ENCODE measurements at regions of chr16 and their contacts with region 1.

Region 1: DNA sequence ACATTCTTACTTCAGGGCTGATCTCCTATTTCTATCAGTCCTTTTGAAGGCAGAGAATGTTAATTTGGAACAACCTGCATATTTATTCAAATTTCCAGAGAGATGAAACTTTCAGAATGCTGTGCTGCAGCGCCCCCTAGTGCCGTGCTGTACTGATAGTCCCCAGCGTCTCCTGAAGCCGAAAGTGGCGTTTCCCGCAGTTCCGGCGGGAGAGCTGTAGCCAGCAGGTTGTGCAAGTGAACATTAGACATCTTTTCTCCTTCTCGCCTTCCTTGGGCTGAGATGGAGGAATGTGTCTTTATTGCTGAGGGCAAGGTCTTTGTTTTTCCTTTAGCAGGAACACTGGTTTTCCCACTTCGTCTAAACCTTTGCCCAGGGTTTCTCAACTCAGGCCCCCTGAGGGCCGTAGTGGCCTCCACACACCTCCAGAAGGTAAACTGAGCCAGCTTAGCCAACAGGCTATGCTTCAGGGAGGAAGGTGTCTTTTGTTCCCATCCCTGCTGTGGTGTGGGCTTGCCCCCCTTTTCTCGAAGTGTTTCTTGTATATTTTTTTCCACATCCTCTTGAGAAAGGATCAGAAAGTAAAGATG is 26.4 kb downstream of the USP10 start:
- DNase-seq: peak; percentile 86
- H3K4me3 Mint-ChIP-seq: no peak overlapping the region
- H3K27ac Mint-ChIP-seq: no peak overlapping the region
- H3K4me1 Mint-ChIP-seq: peaks cover 76% of the 10 kb centered on the region
- H3K27me3 Mint-ChIP-seq: no peaks in the 10 kb centered on the region

Region 2: DNA sequence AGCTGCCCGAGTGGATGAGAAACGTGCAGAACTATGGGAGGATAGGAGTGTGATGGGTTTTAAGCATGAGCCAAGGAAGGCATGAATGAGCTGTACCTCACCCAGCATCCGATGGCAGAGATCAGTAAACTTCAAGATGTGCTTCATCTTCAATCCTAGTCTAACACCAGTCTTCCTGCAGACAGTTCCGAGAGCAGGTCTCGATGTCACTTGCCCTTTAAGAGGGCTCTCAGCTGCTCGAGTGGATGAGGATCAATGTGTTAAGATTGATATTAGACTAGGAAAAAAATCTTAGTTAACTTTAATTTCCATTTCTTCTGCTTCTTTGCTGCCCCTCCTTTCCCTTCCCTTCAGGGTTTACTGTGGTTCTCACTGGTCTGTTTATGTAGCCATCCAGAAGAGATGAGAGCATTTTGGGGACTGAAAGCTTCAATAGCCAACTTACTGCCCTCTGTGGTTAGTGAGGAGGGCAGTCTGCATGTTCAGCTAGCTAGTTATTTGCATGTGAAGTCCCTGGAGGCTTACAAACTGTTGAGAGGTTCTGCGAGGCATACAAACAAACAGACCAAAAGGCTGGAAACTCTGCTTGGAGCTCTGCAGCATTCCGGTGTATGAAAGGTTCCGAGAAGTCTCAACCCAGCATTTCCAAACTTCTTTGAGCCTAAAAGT is 62.6 kb before region 1 on chr16:
- CTCF ChIA-PET with region 1: interaction called, 3 read pairs
- POLR2A ChIA-PET with region 1: interaction called, 10 read pairs
- DNase-seq: no peak
- H3K4me3 Mint-ChIP-seq: no peak overlapping the region
- H3K27ac Mint-ChIP-seq: no peak overlapping the region
- H3K4me1 Mint-ChIP-seq: peaks cover 20% of the 10 kb centered on the region
- H3K27me3 Mint-ChIP-seq: no peaks in the 10 kb centered on the region

Region 3: GRCh38 chr16:84738255-84739038 is 12.3 kb after region 1 on chr16:
- CTCF ChIA-PET with region 1: interaction called, 53 read pairs
- POLR2A ChIA-PET with region 1: no interaction called
- DNase-seq: peak; percentile 84
- H3K4me3 Mint-ChIP-seq: peak overlapping the region; percentile 28
- H3K27ac Mint-ChIP-seq: no peak overlapping the region
- H3K4me1 Mint-ChIP-seq: peaks cover 64% of the 10 kb centered on the region
- H3K27me3 Mint-ChIP-seq: no peaks in the 10 kb centered on the region

Measured in activated CD4-positive, alpha-beta T cell treated with anti-CD3 and anti-CD28 coated beads, Interleukin-2, amount 10 ng/mL, durations not matched to agents 7 days and 5 days (primary cell).